ENCODE measurements at regions of chr5 and their contacts with region 1.

Region 1: DNA sequence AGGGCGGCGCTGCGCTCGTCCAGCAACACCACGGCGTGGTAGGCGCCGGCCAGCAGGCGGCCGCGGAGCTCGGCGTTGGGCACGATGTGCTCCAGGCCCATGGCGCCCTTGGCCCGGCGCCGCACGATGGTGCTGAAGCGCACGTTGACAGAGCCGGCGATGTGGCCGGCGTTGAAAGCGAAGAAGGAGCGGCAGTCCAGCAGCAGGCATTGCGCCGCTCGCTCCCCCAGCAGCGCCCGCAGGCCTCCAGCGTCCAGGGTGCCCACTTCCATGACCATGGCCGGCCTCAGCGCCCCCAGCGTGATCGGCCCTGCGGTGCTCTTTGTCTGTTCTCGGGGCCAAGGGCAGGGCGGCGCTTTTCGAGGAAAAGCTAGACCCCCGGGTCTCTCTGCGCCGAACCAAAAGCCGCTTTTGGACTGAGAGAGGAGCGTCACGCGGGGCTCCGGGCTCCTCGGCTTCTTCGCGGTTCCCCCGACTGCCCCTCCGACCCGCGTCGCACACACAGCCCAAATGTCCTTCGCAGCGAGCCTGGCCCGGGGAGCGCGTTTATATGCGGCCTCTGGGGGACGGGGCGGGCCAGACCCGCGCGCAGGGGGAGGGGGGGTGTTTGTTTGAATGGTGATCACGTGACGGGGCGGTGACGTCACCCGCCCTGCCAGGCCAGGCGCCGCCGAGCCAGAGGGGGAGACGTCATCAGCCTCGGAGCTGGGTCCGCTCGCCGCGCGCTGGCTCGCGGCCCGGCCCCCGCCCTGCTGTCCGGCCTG is at the start of gene DUSP1:
- DNase-seq: peak; percentile 99
- H3K4me3 Mint-ChIP-seq: peak within 1 kb of the TSS; percentile 98
- H3K27ac Mint-ChIP-seq: peak within 1 kb of the TSS; percentile 99
- H3K4me1 Mint-ChIP-seq: peaks cover 50% of the 10 kb centered on the region
- H3K27me3 Mint-ChIP-seq: no peaks in the 10 kb centered on the region
- CTCF ChIP-seq: peak; percentile 30
- total RNA-seq, gene DUSP1: 594 and 611 TPM in 2 replicates

Region 2: GRCh38 chr5:172714491-172715421 is 56.1 kb before region 1 on chr5:
- CTCF ChIA-PET with region 1: interaction called, 66 read pairs
- POLR2A ChIA-PET with region 1: interaction called, 53 read pairs
- intact Hi-C with region 1: loop called (anchors 1 kb)
- DNase-seq: peak; percentile 99
- H3K4me3 Mint-ChIP-seq: no peak overlapping the region
- H3K27ac Mint-ChIP-seq: peak overlapping the region; percentile 80
- H3K4me1 Mint-ChIP-seq: peaks cover 40% of the 10 kb centered on the region
- H3K27me3 Mint-ChIP-seq: no peaks in the 10 kb centered on the region
- CTCF ChIP-seq: peak; percentile 97

Region 3: GRCh38 chr5:172758083-172758833 is 12.6 kb before region 1 on chr5:
- CTCF ChIA-PET with region 1: interaction called, 4 read pairs
- POLR2A ChIA-PET with region 1: interaction called, 32 read pairs
- intact Hi-C with region 1: no loop called
- DNase-seq: peak; percentile 98
- H3K4me3 Mint-ChIP-seq: no peak overlapping the region
- H3K27ac Mint-ChIP-seq: peak overlapping the region; percentile 76
- H3K4me1 Mint-ChIP-seq: peaks cover 12% of the 10 kb centered on the region
- H3K27me3 Mint-ChIP-seq: no peaks in the 10 kb centered on the region
- CTCF ChIP-seq: no peak

Region 4: DNA sequence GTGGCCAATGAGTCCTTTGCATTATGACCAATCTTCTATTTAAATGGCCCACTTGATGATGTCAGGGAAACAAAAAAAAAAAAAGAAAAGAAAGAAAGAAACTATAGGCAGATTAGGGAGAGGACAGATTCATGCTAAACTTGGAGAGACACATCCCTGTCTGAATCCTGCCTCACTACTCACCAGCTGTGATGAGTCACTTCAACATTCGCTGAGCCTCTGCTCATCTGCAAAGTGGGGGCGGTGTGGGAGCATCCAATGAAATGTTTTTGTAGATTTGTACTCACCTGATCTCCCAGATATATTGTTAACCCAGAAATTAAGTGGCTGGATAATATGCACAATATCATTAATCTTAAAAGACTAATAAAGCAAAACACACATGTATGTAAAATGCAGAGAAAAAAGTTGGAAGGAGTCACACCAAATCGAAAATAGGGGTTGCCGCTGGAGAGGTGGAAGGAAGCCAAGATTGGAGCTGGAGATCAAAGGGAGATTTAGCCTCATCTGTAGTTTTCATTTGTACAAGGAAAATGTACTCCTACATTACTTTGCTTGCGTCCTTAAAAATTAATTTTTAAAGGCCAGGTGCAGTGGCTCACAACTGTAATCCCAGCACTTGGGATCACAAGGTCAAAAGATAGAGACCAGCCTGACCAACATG is 46.2 kb after region 1 on chr5:
- CTCF ChIA-PET with region 1: interaction called, 6 read pairs
- POLR2A ChIA-PET with region 1: interaction called, 1,263 read pairs
- intact Hi-C with region 1: loop called (anchors 1 kb)
- DNase-seq: peak; percentile 91
- H3K4me3 Mint-ChIP-seq: peak overlapping the region; percentile 38
- H3K27ac Mint-ChIP-seq: peak overlapping the region; percentile 20
- H3K4me1 Mint-ChIP-seq: peaks cover 31% of the 10 kb centered on the region
- H3K27me3 Mint-ChIP-seq: no peaks in the 10 kb centered on the region
- CTCF ChIP-seq: no peak

Region 5: GRCh38 chr5:172886974-172887501 is 116.2 kb after region 1 on chr5:
- CTCF ChIA-PET with region 1: interaction called, 5 read pairs
- POLR2A ChIA-PET with region 1: interaction called, 74 read pairs
- intact Hi-C with region 1: loop called (anchors 1 kb)
- DNase-seq: peak; percentile 100
- H3K4me3 Mint-ChIP-seq: peak overlapping the region; percentile 61
- H3K27ac Mint-ChIP-seq: peak overlapping the region; percentile 98
- H3K4me1 Mint-ChIP-seq: peaks cover 46% of the 10 kb centered on the region
- H3K27me3 Mint-ChIP-seq: no peaks in the 10 kb centered on the region
- CTCF ChIP-seq: no peak

Region 6: GRCh38 chr5:172958331-172959046 is 187.6 kb after region 1 on chr5:
- CTCF ChIA-PET with region 1: interaction called, 4 read pairs
- POLR2A ChIA-PET with region 1: interaction called, 16 read pairs
- intact Hi-C with region 1: no loop called
- DNase-seq: peak; percentile 80
- H3K4me3 Mint-ChIP-seq: peak overlapping the region; percentile 94
- H3K27ac Mint-ChIP-seq: peak overlapping the region; percentile 98
- H3K4me1 Mint-ChIP-seq: peaks cover 49% of the 10 kb centered on the region
- H3K27me3 Mint-ChIP-seq: no peaks in the 10 kb centered on the region
- CTCF ChIP-seq: no peak